Mucosa of descending colon (tissue), 3 donors: ENCODE measurements at regions of chr20 and their contacts with region 1.

Region 1: GRCh38 chr20:45436732-45437391 is 20.9 kb downstream of the PIGT start:
- DNase-seq: peak; percentile 91 to 96 (median 94)
- ATAC-seq: peak; percentile 100
- H3K4me3 ChIP-seq: peak overlapping the region; percentile 20
- H3K4me1 ChIP-seq: no peaks in the 10 kb centered on the region
- CTCF ChIP-seq: peak; percentile 96

Region 2: DNA sequence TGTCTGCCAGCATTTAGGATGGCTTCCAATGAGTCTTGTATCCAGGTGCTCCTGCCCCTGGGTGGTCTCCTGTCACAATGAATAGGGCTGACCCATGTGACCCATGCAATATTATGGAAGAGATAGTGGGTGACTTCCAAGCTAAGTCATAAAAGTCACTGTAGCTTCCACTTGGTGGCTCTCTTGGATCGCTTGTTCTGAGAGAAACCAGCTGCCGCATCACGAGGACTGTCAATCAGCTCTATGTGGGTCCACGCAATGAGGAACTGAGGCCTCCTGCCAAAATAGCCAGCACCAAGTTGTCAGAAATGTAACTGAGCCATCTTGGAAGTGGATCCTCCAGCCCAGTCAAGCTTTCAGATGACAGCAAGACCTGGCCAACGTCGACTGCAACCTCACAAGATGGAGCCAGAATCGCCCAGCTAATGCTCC is 113.9 kb before region 1 on chr20:
- intact Hi-C with region 1: loop called in 1 of 2 experiments (anchors 5 kb)
- DNase-seq: peak in 2 of 3 donors; percentile 55 to 75
- ATAC-seq: peak; percentile 67
- H3K4me3 ChIP-seq: no peak overlapping the region
- H3K4me1 ChIP-seq: peaks cover 27% of the 10 kb centered on the region
- CTCF ChIP-seq: no peak

Region 3: GRCh38 chr20:45373353-45374100 is 63.3 kb before region 1 on chr20:
- intact Hi-C with region 1: loop called in 1 of 2 experiments (anchors 5 kb)
- DNase-seq: peak; percentile 93 to 96 (median 93)
- ATAC-seq: peak; percentile 95
- H3K4me3 ChIP-seq: peak overlapping the region; percentile 6
- H3K4me1 ChIP-seq: peaks cover 13% of the 10 kb centered on the region
- CTCF ChIP-seq: peak; percentile 85